ENCODE measurements at regions of chr1 and their contacts with region 1.

Region 1: GRCh38 chr1:154558575-154559465 is at the start of gene UBE2Q1:
- DNase-seq: peak; percentile 96
- ATAC-seq: peak; percentile 92
- H3K4me3 ChIP-seq: peak within 1 kb of the TSS; percentile 91 to 96 (median 95)
- H3K27ac ChIP-seq: peak within 1 kb of the TSS; percentile 76
- H3K4me1 ChIP-seq: peaks cover 34% of the 10 kb centered on the region
- H3K27me3 ChIP-seq: no peaks in the 10 kb centered on the region; a peak in 1 of 5 replicates
- CTCF ChIP-seq: 0 out of 2 replicates have a peak, but pooled peaks have one; percentile 19
- EP300 ChIP-seq: peak in 1 of 2 experiments; percentile 35; a peak in 1 of 4 replicates
- POLR2A ChIP-seq: peak; percentile 42 to 65; a peak in 3 of 4 replicates
- RAD21 ChIP-seq: 0 out of 2 replicates have a peak, but pooled peaks have one; percentile 30
- total RNA-seq, gene UBE2Q1: 37.9 and 41.7 TPM in 2 replicates

Region 2: DNA sequence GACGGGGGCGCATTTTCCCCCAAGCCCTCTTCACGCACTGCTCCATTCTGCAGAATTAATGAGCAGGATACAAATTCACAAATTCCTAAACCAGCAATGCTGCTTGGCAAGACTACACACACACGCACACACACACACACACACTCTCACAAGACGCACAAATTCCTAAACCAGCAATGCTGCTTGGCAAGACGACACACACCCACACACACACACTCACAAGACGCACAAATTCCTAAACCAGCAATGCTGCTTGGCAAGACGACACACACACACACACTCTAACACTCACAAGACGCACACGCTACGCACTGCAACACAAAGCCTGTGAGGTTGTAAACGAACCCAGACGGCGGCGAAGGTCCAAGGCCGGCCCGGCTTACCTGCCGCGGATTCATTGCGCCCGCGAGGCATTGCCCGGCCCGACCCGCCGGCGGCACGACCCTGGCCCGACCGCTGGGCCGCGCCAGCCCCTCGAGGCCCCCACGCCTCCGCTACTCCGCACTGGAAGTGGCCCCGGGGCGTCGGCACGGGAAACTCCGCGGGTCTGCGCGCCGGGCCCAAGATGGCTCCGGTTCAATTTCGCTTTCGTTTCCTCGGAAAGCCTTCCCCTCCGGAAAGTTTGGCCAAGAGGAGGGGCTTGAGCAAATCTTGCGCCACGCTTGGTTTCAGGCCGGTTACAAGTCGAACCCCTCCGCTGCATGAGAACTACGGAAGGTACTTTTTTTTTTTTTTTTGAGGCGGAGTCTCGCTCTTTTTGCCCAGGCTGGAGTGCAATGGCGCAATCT is 49.0 kb after region 1 on chr1 and contains the start of gene ADAR:
- CTCF ChIA-PET with region 1: no interaction called
- POLR2A ChIA-PET with region 1: interaction called, 5 read pairs
- in situ Hi-C with region 1: no loop called
- intact Hi-C with region 1: loop called (anchors 5 kb)
- DNase-seq: peak; percentile 93
- ATAC-seq: peak; percentile 86
- H3K4me3 ChIP-seq: peak within 1 kb of the TSS; percentile 59 to 98 (median 87)
- H3K27ac ChIP-seq: peak within 1 kb of the TSS; percentile 98
- H3K4me1 ChIP-seq: peaks cover 52% of the 10 kb centered on the region
- H3K27me3 ChIP-seq: no peaks in the 10 kb centered on the region; a peak in 1 of 5 replicates
- CTCF ChIP-seq: peak; percentile 39
- EP300 ChIP-seq: 0 out of 4 replicates have a peak, but pooled peaks of 1 of the 2 experiments have one; percentile 9
- POLR2A ChIP-seq: peak; percentile 31 to 39; a peak in 2 of 4 replicates
- RAD21 ChIP-seq: peak; percentile 49; the same call in 1 of the 2 replicates
- total RNA-seq, gene ADAR: 70.8 and 94.6 TPM in 2 replicates

Region 3: DNA sequence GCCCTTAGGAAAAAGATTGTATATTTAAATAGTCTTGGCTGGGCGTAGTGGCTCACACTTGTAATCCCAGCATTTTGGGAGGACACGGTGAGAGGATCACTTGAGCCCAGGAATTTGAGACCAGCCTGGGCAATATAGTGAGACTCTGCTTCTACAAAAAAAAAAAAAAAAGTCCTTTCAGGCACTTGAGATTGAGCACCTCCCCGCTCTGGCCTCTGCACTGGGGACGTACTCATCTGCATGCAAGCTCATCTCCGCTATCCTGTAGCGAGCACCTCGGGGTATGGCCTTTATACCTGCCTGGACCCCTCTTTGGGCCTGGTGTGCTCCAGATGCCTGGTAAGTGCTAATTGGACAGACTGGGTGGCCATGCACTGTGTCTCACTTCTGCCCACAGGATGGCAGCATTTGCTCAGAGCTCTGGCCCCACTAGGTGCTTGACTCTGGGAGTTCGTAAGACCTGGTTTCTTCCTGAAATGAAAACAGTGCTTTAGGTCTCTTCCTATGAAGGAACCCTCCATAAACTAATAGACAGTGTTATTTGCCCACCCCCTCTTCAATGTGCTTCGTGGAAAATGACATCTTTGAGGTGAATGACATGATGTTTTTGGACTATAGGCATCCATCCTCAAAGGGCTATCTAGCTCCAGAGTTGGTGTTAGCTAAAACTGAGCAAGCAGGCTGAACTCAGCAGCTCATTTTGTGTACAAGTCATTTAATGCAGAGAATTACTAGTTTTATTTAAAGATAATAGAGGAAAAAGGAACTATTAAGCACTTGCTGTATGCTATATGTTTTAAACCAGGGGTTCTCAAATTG is 110.9 kb after region 1 on chr1:
- CTCF ChIA-PET with region 1: no interaction called
- POLR2A ChIA-PET with region 1: interaction called, 3 read pairs
- in situ Hi-C with region 1: no loop called
- intact Hi-C with region 1: loop called (anchors 1 kb)
- DNase-seq: peak; percentile 65
- ATAC-seq: peak; percentile 100
- H3K4me3 ChIP-seq: no peak overlapping the region
- H3K27ac ChIP-seq: no peak overlapping the region
- H3K4me1 ChIP-seq: no peaks in the 10 kb centered on the region
- H3K27me3 ChIP-seq: no peaks in the 10 kb centered on the region; a peak in 1 of 5 replicates
- CTCF ChIP-seq: peak; percentile 94
- EP300 ChIP-seq: no peak
- POLR2A ChIP-seq: no peak
- RAD21 ChIP-seq: peak; percentile 92

Region 4: GRCh38 chr1:154760469-154760933 is 201.7 kb after region 1 on chr1:
- CTCF ChIA-PET with region 1: interaction called, 9 read pairs
- POLR2A ChIA-PET with region 1: no interaction called
- in situ Hi-C with region 1: loop called (anchors 10 kb)
- intact Hi-C with region 1: loop called (anchors 5 kb)
- DNase-seq: peak; percentile 17
- ATAC-seq: peak; percentile 99
- H3K4me3 ChIP-seq: peak overlapping the region; percentile 38 to 52 (median 40); a peak in 2 of 6 replicates
- H3K27ac ChIP-seq: no peak overlapping the region
- H3K4me1 ChIP-seq: no peaks in the 10 kb centered on the region
- H3K27me3 ChIP-seq: no peaks in the 10 kb centered on the region; a peak in 2 of 5 replicates
- CTCF ChIP-seq: peak; percentile 87
- EP300 ChIP-seq: no peak
- POLR2A ChIP-seq: no peak
- RAD21 ChIP-seq: peak; percentile 84